Transverse colon (tissue), 4 donors: ENCODE measurements at regions of chr4 and their contacts with region 1.

Region 1: DNA sequence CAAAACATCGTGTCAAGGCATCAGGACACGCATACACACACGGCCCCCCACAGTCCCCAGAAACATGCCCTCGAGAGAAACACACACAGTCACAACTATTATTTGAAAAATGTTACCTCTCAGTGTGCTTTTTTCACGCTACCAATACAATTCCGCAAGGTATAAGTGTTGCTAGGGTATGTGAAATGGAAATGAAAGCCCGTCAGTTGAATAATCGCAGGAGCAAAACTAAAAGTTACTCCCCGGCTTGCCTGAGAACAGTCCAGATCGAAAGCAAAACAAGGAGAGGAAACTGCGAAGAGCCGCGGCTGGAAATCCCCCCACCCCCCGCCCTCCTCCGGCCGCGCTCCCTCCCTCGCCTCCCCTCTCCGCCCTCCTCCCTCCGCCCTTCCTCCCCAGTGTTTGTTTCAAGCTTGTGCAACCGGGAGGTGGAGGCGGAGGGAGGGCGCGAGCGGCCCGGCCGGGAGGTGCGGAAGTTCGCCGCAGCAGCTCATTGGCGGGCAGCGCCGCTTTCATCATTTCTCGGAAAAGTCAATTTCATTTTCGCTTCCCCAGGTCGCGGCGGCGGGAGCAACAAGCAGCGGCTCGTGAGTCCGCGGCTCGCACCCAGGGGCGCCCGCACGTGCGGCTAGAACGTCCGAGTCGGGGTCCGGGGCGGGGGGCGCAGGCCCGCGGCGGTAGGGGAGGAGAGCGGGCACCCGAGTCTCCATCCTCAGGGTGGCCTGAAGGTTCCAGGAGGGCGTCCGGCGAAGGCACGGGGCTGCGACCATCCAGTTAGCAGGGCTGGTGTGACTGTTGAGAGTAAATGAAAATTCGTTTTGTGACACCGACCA is at the start of gene IRF2:
- DNase-seq: peak; percentile 98
- H3K4me3 ChIP-seq: peak within 1 kb of the TSS; percentile 75 to 99 (median 80)
- H3K27ac ChIP-seq: peak within 1 kb of the TSS; percentile 96 to 100 (median 98)
- H3K4me1 ChIP-seq: peaks cover 9 to 53% (median 32%) of the 10 kb centered on the region in 4 donors
- H3K27me3 ChIP-seq: no peaks in the 10 kb centered on the region
- CTCF ChIP-seq: peak in 2 of 5 experiments; percentile 10 to 51
- EP300 ChIP-seq: peak; percentile 14
- POLR2A ChIP-seq: peak; percentile 98
- total RNA-seq, gene IRF2: 15.3 to 85.3 (median 42.5) TPM

Region 2: DNA sequence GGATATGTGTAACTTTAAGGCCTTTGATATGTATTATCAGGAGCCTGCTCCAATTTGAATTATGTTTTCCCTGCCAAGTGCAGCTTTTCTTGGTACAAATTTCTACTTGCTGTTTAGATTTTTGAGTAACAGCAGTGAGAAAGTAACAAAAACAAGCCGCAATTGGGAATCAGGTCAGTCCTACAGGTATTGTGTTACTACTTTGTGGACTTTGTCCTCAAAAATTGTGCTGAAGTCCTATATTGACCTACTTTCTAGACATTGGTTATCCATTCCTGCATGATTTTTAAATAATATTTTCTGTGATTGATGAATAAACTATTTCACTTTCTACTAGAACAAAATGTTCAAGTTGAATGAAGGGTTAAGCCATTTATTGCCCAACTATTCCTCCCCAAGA is 1024.4 kb before region 1 on chr4:
- in situ Hi-C with region 1: no loop called
- intact Hi-C with region 1: loop called (anchors 5 kb)
- DNase-seq: no peak
- H3K4me3 ChIP-seq: no peak overlapping the region
- H3K27ac ChIP-seq: no peak overlapping the region
- H3K4me1 ChIP-seq: peaks cover 22 to 35% (median 26%) of the 10 kb centered on the region in 4 donors
- H3K27me3 ChIP-seq: no peaks in the 10 kb centered on the region
- CTCF ChIP-seq: no peak
- EP300 ChIP-seq: no peak
- POLR2A ChIP-seq: no peak

Region 3: DNA sequence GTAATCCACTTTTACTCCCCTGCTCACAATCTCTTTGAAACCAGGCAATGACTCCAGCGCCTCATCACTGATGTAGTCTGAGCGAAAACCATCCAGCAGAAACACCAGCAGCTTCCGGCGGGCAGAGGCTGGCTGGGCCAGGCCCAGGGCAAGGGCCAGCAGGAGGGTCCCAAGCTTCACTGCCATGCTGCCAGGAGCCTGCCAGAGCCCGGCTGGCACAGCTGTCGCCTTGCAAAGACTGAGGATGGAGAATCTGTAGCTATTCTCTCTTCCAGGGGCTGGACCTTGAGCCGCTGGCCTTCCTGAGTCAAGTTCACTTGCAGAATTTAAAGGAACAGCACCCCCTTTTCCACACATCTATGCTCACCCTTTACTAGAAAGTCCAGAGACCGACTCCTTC is 256.8 kb before region 1 on chr4 and contains the start of gene ENPP6:
- in situ Hi-C with region 1: no loop called
- intact Hi-C with region 1: no loop called
- DNase-seq: no peak
- H3K4me3 ChIP-seq: no peak within 1 kb of the TSS
- H3K27ac ChIP-seq: no peak within 1 kb of the TSS
- H3K4me1 ChIP-seq: no peaks in the 10 kb centered on the region
- H3K27me3 ChIP-seq: no peaks in the 10 kb centered on the region
- CTCF ChIP-seq: no peak
- EP300 ChIP-seq: no peak
- POLR2A ChIP-seq: no peak
- total RNA-seq, gene ENPP6: 0.14 to 0.64 TPM in 2 of 4 donors, not detected in the others

Region 4: DNA sequence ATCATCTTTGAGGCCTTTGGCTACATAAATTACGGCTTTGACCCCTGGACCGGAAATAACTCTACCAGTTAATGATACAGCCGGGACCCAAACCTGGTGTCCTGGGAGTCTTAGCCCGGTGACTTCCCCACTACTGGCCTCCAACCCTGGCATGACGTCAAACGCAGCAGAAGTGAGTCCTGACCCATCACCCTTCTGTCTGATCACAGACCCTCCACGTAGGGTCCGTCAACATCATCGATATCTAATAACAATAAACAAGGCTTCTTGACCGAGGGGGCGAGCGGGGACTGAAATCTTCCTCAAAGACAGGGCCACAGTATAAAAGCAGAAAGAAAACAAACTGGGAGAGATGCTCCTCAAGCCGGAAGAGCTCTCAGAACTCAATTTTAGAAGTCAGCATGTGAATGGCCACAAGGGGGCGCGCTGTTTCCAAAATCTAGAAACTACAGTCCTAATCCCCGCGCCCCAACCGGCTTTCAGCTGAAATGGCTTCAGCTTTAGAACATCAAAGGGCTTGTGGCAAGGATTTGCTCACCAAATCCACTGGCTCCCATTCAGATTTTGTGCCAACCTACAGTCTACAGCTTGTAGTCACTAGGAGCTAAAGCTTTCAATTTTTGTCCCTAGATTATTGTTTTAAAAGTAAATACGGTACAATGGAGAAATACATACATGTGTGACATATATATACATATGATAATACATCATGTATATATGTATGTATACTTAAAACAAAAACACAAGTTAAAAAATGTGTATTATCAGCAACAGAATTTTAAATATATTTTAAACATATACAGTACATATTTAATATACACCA is 210.4 kb before region 1 on chr4:
- in situ Hi-C with region 1: no loop called
- intact Hi-C with region 1: loop called (anchors 10 kb)
- DNase-seq: peak; percentile 96
- H3K4me3 ChIP-seq: no peak overlapping the region
- H3K27ac ChIP-seq: peak overlapping the region in 1 of 4 donors; percentile 14
- H3K4me1 ChIP-seq: peaks cover 0 to 5% (median 0%) of the 10 kb centered on the region in 4 donors
- H3K27me3 ChIP-seq: no peaks in the 10 kb centered on the region
- CTCF ChIP-seq: peak; percentile 89 to 97 (median 96)
- EP300 ChIP-seq: no peak
- POLR2A ChIP-seq: no peak

Region 5: DNA sequence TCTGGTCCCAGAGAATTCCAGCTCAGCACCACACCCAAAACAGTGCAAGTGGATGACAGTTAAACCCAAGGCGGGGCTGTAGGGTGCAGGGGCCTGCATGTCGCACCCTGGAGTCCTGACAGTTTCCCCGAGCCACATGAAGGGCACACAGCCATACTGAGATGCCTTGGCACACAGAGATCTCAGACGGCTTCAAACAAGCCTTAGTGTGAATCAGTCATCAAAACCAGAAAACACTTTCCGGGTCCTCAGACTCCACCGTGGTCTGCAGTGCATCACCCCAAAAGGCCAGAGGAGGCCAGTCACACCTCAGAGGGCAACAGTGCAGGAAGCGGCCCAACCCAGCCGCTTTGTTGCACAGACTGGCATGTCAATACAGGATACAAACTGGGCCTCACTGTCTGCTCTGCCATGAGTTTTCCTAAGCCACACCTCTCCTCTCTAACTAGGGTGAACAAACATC is 192.2 kb before region 1 on chr4:
- in situ Hi-C with region 1: loop called in 1 of 4 experiments (anchors 10 kb)
- intact Hi-C with region 1: no loop called
- DNase-seq: peak; percentile 65
- H3K4me3 ChIP-seq: no peak overlapping the region
- H3K27ac ChIP-seq: peak overlapping the region; percentile 63 to 81 (median 70)
- H3K4me1 ChIP-seq: peaks cover 9 to 30% (median 15%) of the 10 kb centered on the region in 4 donors
- H3K27me3 ChIP-seq: no peaks in the 10 kb centered on the region
- CTCF ChIP-seq: peak in 4 of 5 experiments; percentile 13 to 57 (median 33)
- EP300 ChIP-seq: no peak
- POLR2A ChIP-seq: no peak

Region 6: DNA sequence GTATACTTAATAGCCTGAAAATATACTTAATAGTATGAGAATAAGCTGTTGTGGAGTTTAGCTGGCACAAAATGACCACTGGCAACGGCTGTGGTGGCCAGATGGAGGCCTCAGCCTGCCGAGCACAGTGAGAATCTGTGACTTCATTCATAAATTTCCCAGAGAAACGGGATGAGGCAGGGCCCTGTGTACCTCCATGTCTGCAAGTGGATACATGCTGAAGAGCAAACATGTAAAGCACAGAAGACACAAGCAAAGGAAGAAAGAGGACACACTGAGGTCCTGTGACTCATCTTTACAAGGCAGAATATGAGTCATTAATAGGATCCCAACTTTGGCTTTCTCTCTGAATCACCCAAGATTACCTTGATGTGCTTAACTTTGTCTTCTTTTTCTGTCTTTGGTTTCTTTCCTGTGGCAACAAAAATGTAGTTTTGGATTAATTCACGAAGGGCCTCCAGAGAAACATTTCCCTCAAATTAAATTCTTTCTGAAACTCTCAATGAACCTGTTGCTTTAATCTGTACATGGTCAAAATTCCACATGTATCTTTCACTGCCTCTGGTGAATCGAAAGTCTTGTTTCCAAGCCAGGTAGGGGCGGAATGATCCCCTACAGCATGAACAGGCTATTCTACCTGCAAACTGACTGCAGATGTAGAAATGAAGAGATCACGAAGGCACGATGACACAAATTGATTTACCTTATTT is 56.5 kb before region 1 on chr4:
- in situ Hi-C with region 1: no loop called
- intact Hi-C with region 1: loop called (anchors 10 kb)
- DNase-seq: no peak
- H3K4me3 ChIP-seq: no peak overlapping the region
- H3K27ac ChIP-seq: peak overlapping the region; percentile 65 to 76 (median 72)
- H3K4me1 ChIP-seq: peaks cover 5 to 45% (median 20%) of the 10 kb centered on the region in 4 donors
- H3K27me3 ChIP-seq: no peaks in the 10 kb centered on the region
- CTCF ChIP-seq: no peak
- EP300 ChIP-seq: no peak
- POLR2A ChIP-seq: no peak

Region 7: DNA sequence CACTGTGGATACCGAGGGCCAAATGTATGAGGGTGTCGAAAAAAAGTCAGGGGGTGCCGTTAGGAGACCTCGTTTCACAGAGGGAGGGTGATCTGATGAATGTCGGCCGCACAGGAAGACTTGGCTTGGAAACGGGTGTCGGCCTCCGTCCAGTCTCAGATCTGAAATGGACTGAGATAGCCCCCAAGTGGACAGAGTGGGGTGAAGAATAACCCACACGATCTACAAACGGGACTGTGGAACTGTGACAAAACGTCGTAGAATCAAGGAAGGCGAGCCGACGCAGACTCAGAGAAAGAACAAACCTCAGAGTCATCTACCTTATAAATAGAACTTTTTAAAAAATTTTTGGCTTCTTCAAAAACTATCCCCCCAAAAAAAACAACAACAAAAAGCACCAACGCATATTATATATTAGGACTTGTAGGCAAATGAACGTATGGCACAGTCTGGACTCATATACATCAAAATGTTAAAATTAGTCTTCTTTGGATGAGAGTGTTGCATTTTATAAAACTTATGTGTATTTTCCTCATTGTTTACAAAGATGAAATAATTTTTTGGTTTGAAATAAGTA is 63.6 kb after region 1 on chr4:
- in situ Hi-C with region 1: loop called in 1 of 4 experiments (anchors 10 kb)
- intact Hi-C with region 1: loop called (anchors 5 kb)
- DNase-seq: peak; percentile 89
- H3K4me3 ChIP-seq: peak overlapping the region; percentile 29 to 64 (median 55)
- H3K27ac ChIP-seq: peak overlapping the region; percentile 93 to 97 (median 96)
- H3K4me1 ChIP-seq: peaks cover 7 to 24% (median 11%) of the 10 kb centered on the region in 4 donors
- H3K27me3 ChIP-seq: no peaks in the 10 kb centered on the region
- CTCF ChIP-seq: peak; percentile 58 to 90 (median 63)
- EP300 ChIP-seq: no peak
- POLR2A ChIP-seq: no peak

Region 8: DNA sequence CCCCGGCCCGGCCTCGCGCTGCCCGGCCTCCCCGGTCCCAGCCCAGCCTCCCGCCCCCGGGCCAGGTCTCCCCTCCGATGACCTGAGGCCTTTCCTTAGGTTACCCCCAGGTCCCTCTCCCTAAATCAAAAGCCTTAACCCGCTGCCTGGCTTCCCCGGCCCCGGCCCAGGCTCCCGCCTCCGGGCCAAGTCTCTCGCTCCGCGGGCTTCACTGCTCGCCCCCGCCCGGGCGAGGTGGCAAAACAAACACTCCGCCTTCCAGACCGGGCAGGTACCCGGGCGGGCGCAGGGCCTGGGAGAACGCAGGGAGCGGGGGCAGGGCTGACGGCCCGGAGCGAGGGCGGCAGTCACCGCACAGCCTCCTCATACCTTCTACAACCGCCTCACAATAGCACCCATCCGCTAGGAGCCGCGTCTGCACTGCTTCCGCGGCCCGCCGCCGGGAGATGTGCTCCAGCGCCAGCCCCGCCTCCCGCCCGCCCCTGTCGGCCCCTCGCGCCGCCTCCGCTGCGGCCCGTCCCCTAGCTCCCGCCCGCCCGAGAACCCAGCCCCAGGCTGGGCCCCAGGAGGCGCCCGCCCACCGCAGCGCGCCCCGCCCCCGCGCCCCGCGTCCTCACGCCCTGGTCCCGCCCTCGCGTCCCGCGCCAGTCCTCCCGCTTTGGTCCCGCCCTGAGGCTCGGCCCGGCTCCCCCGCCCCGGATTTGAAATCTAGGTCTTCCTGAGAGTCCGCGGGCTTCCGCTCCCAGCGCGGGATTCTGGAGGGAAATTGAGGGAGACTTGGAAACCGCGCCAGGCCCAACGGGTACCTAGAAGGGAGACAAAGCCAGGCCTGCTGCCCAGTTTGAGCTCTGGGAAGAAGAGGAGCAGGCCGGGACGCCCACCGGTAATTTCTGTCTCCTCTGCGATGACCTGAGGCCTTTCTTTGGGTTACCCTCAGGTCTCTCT is 174.8 kb after region 1 on chr4 and contains the starts of genes CASP3 and PRIMPOL:
- in situ Hi-C with region 1: no loop called
- intact Hi-C with region 1: loop called (anchors 5 kb)
- DNase-seq: peak; percentile 98
- H3K4me3 ChIP-seq: peak within 1 kb of the TSS; percentile 92 to 99 (median 94)
- H3K27ac ChIP-seq: peak within 1 kb of the TSS; percentile 99 to 100 (median 99)
- H3K4me1 ChIP-seq: peaks cover 22 to 46% (median 38%) of the 10 kb centered on the region in 4 donors
- H3K27me3 ChIP-seq: no peaks in the 10 kb centered on the region
- CTCF ChIP-seq: peak in 2 of 5 experiments; percentile 24 to 40
- EP300 ChIP-seq: no peak
- POLR2A ChIP-seq: peak; percentile 96
- total RNA-seq, gene CASP3: 6.2 to 147 (median 35.1) TPM
- total RNA-seq, gene PRIMPOL: 19.7 to 28.1 (median 24.6) TPM in 3 of 4 donors, not detected in the other

Region 9: DNA sequence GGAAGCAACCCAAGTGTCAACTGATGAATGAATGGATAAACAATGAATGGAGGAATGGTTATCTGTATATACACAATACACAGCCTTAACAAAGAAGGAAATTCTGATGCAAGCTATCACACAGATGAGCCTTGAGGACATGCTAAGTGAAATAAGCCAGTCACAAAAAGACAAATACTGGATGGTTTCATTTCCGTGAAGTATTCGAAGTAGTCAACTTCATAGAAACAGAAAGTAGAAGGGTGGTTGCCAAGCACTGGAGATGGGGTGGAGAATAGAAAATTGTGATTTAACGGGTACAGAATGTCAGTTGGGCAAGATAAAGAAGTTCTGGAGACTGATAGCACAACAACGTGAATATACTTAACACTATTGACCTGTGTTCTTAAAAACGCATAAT is 231.2 kb after region 1 on chr4:
- in situ Hi-C with region 1: no loop called
- intact Hi-C with region 1: no loop called
- DNase-seq: no peak
- H3K4me3 ChIP-seq: no peak overlapping the region
- H3K27ac ChIP-seq: no peak overlapping the region
- H3K4me1 ChIP-seq: no peaks in the 10 kb centered on the region
- H3K27me3 ChIP-seq: no peaks in the 10 kb centered on the region
- CTCF ChIP-seq: no peak
- EP300 ChIP-seq: no peak
- POLR2A ChIP-seq: no peak